Naive thymus-derived CD8-positive, alpha-beta T cell (primary cell): ENCODE measurements at regions of chr14 and their contacts with region 1.

Region 1: DNA sequence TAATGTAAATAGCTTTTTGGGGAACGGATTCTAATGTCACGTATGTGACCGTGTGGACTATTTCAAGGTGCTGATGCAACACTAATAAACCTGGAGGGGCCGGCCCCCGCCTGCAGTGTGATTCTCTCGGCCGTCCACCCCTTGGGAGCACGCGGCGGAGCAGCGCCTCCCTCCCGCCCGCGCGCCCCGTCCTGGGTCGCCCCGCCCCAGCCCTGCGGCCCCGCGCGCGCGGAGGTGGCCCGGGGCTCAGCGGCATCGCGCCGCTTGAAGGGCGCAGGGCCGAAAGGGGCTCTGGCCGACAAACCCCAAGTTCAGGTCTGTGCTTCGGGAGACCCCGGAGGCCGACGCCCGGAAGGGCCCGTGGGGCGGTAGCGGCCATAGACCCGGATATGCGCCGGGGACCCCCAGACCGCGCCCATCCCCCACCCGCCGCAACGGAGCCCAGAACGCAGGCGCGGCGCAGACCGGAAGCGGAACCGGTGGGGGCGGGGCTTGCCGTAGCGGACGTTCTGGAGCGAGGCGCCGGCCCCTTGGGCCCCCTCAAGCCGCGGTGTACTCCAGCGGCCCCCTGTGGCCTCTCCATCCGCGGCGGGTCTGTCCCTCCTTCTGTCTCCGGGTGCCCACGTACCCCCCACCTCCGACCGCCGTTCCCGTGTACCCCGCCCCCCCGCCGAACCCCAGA is at the start of gene TEX22:
- DNase-seq: peak; percentile 75 to 94 (median 88)
- ATAC-seq: peak; percentile 85 to 89
- H3K4me3 Mint-ChIP-seq: peak within 1 kb of the TSS; percentile 75 to 89 (median 82)
- H3K27ac Mint-ChIP-seq: peak within 1 kb of the TSS in 9 of 10 donors; percentile 83 to 94 (median 88)
- H3K4me1 Mint-ChIP-seq: peaks cover 9 to 32% (median 26%) of the 10 kb centered on the region in 4 donors
- H3K27me3 Mint-ChIP-seq: no peaks in the 10 kb centered on the region
- polyA plus RNA-seq, gene TEX22: 0.09 to 0.15 TPM in 2 of 3 donors, not detected in the other

Region 2: DNA sequence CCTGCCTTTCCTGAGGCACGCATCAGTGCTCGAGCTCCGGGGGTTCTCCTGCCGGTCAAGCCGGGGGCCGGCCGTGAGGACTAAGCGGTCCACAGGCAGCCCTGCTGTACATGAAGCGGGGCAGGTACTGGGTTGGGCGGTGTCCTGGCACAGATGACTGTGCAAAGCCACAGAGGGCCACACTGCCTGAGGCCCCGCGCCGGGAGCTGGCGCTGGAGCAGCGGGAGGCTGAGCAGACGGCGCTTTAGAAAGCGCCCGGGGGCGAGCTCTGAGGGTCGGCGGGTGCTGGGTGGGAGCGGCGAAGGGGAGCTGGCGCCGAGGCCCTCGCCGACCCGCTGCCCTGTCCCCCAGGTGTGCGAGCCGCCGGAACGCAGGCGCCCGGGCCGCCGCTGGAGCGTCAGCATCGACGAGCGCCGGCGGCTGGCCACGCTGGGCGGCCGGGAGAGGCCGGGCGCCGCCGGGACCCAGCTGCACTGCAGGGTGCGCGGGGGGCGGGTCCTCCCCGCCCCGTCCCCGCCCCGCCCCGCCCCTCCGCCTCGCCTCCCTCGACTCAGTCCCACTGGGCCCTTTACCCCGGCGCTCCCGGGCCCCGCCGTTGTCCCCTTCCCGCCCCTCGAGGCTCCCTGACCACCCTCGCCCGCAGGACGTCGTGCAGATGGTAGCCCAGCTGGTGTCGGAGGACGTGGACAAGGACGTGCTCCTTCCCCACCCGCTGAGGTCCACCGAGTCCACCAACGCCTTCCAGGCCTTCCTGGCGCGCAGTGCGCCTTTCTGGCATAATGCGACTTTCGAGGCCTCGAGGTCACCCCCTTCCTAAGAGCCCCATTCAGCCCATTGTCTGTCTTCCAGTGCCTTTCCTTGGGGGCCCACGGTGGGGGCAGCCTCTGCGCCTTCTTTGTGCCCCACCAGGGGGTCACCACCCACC is 13.1 kb after region 1 on chr14:
- POLR2A ChIA-PET with region 1: interaction called, 19 read pairs
- DNase-seq: peak in 3 of 10 donors; percentile 24 to 47 (median 33)
- ATAC-seq: peak; percentile 34 to 53
- H3K4me3 Mint-ChIP-seq: peak overlapping the region; percentile 33 to 70 (median 56)
- H3K27ac Mint-ChIP-seq: peak overlapping the region in 1 of 10 donors; percentile 19
- H3K4me1 Mint-ChIP-seq: peaks cover 2 to 18% (median 12%) of the 10 kb centered on the region in 4 donors
- H3K27me3 Mint-ChIP-seq: peaks cover 0 to 13% (median 6%) of the 10 kb centered on the region in 5 donors